ENCODE measurements at regions of chr17 and their contacts with region 1.

Region 1: GRCh38 chr17:77331301-77331864 is 190.6 kb downstream of the SEC14L1 start:
- DNase-seq: peak; percentile 98
- ATAC-seq: peak; percentile 88
- H3K4me3 Mint-ChIP-seq: peak overlapping the region; percentile 54
- H3K27ac Mint-ChIP-seq: peak overlapping the region; percentile 90
- H3K4me1 Mint-ChIP-seq: peaks cover 45% of the 10 kb centered on the region
- H3K27me3 Mint-ChIP-seq: no peaks in the 10 kb centered on the region
- CTCF ChIP-seq: peak; percentile 98

Region 2: DNA sequence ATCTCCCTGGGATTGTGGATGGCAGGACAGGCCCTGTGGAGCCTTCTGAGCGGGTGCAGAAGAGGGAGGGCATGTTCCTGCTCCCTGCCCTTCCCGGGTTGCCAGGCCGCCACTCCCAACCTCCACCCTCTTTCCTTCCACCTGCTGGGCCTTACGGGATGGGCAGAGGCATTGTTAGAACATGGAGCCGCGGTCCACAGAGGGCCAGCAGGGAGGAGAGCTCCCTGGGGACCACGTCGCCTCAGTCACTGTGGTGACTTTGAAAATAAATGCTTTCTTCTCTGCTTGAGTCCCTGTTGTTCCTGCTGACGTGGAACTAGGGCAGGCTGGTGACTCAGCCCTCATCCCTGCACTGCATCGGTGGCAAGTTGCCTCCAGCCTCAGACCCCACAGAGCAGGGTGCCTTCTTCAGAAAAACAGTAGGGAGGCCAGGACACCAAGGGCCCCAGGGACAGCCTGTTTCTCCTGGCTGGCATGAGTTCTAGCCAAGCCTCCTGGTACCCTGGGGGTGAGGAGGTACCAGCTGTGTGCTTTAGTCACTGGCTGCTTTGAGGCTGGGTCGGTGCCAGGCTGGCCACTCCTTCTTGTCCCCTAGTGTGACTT is 34.3 kb after region 1 on chr17:
- CTCF ChIA-PET with region 1: interaction called, 10 read pairs
- POLR2A ChIA-PET with region 1: interaction called, 4 read pairs
- intact Hi-C with region 1: no loop called
- DNase-seq: peak; percentile 59
- ATAC-seq: peak; percentile 66
- H3K4me3 Mint-ChIP-seq: no peak overlapping the region
- H3K27ac Mint-ChIP-seq: no peak overlapping the region
- H3K4me1 Mint-ChIP-seq: peaks cover 47% of the 10 kb centered on the region
- H3K27me3 Mint-ChIP-seq: no peaks in the 10 kb centered on the region
- CTCF ChIP-seq: no peak

Region 3: DNA sequence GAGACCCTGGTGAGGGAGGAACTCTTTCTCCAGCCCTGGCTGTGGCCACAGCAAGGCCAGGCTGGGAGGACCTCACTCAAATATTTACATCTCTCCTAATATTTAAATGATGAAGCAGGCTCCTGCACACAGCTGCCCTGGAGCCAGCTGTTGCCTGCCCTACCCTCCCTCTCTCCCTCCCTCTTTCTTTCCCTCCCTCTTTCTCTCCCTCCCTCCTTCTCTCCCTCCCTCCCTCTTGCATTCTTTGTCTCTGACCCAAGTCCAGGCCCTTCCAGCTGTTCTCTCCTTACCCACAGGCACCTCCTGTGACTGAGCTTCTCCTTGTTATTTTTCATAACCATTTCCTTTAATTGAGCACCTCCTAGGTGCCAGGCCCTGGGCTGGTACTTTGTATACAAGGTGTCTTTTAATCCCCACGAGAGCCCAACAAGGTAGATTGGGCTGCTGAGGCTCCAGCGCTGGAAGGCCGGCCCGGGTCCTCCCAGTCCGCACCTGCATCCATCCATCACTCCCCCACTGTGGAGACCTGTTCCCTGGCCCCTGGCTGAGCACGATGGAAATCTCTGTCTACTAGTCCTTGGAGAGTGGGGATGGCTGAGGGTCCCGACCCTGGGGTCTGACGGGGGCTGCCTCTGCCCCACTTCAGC is 51.7 kb after region 1 on chr17:
- CTCF ChIA-PET with region 1: interaction called, 15 read pairs
- POLR2A ChIA-PET with region 1: interaction called, 5 read pairs
- intact Hi-C with region 1: loop called (anchors 5 kb)
- DNase-seq: no peak
- ATAC-seq: peak; percentile 5
- H3K4me3 Mint-ChIP-seq: no peak overlapping the region
- H3K27ac Mint-ChIP-seq: peak overlapping the region; percentile 63
- H3K4me1 Mint-ChIP-seq: peaks cover 87% of the 10 kb centered on the region
- H3K27me3 Mint-ChIP-seq: no peaks in the 10 kb centered on the region
- CTCF ChIP-seq: no peak

Region 4: DNA sequence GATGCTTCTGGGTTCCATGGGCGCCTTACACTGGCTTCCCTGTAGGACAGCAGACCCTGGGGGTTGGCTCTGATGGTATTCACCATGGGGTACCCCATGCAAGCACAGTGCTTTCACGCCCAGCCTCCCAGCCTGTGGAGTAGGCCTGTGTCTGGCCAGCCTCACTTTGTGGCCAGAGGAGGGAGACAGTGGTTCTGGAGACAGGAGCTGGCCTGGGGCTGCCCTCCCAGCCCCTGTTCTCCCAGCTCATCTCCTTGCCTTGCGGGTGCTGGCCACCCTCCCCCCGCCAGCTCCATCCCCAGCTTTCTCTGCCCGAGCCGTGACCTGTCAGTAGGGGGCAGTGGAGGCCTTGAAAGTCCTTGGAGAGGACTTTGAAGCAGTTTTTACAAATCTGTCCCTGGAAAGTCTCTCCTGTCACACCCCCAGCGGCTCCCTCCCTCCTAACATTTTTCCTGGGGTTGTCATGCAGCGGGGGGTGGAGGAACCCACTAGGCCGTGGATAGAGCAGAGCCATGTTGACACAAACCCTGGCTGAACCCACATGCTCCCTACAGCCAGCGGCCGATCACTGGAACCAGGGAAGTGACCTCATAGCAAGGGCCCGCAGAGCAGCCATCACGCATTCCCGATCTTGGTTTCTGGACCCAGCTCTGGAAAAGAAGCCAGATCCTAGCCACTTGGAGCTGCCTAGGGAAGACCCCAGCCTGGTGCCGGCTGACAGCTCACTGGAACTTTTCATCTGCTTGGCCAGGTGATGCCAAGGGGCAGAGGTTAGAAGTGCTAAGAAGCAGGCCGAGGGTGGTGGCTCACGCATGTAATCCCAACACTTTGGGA is 98.8 kb after region 1 on chr17:
- CTCF ChIA-PET with region 1: interaction called, 21 read pairs
- POLR2A ChIA-PET with region 1: no interaction called
- intact Hi-C with region 1: loop called (anchors 5 kb)
- DNase-seq: peak; percentile 89
- ATAC-seq: peak; percentile 34
- H3K4me3 Mint-ChIP-seq: no peak overlapping the region
- H3K27ac Mint-ChIP-seq: peak overlapping the region; percentile 91
- H3K4me1 Mint-ChIP-seq: peaks cover 83% of the 10 kb centered on the region
- H3K27me3 Mint-ChIP-seq: no peaks in the 10 kb centered on the region
- CTCF ChIP-seq: peak; percentile 89

Region 5: DNA sequence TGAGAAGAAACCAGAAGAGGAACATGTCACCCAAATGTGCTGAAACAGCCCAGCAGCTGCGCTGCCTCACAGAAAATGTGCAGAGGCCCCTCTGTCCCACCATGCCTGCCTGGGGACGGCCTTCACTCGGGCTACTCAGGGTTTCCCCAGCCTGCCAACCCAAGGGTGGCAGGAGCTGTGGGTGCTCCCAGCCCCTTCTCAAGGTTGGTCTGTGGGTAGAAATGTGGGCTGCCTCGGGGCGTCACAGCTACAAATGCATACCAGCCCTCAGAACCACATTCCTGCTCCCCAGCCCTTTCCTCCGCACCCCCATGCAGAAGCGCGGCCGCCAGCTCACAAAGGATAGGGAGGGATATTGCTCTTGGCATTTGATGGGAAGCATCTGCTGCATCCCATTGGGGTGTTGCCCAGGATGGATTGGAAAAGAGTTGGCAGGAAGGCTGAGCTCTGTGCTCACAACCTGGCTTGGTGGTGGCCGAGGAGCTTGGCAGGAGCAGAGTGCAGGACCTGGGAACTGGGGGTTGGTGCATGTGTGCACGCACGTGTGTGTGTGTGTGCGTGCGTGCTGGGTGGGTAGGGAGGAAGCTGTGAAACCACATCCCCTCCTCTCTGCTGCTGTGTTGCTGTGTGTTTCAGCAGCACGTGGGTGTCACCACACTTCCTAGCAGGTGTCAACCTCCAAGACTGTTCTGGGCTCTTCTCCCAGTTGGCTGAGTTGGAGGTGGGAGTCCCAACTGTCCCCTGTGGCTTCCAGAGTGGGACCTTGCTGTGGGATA is 113.8 kb after region 1 on chr17:
- CTCF ChIA-PET with region 1: interaction called, 11 read pairs
- POLR2A ChIA-PET with region 1: interaction called, 4 read pairs
- intact Hi-C with region 1: no loop called
- DNase-seq: peak; percentile 93
- ATAC-seq: peak; percentile 50
- H3K4me3 Mint-ChIP-seq: peak overlapping the region; percentile 77
- H3K27ac Mint-ChIP-seq: peak overlapping the region; percentile 94
- H3K4me1 Mint-ChIP-seq: peaks cover 91% of the 10 kb centered on the region
- H3K27me3 Mint-ChIP-seq: no peaks in the 10 kb centered on the region
- CTCF ChIP-seq: no peak

Region 6: DNA sequence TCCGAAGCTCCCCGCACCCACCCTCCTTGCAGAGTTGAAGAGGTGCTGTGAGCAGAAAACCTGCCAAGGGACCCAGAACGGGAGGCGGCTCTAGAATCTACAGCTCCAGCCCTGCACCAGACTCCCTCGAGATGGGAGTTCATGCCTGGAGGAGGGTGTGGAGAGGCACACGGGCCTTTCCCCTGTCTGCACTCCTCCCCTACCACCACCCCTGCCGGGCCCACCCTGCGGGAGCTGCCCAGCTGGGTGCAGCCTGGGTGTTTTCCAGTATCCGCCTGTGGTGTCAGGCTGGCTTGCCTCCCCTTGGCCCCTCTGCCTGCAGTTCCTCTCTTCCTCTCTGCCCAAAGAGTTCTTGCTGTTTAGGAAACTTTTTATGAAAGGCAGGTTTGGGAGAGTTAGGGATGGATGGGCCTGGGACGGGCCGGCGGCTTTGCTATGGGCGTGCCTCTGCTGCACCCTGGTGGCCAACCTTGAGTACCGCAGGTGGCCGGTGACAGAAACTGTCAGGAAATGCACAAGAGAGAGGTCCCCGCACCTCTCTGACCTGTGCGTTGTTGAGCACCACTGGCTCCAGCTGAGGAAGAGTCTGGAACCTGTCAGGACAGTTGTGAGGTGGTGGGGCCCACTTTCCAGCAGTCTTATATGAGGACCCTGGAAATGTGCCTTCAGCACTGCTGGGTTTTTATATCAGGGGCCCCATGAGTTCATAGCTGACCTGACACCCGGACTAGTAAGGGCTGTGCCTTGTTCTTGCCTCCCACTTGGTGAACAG is 163.5 kb after region 1 on chr17:
- CTCF ChIA-PET with region 1: interaction called, 24 read pairs
- POLR2A ChIA-PET with region 1: no interaction called
- intact Hi-C with region 1: no loop called
- DNase-seq: peak; percentile 81
- ATAC-seq: peak; percentile 76
- H3K4me3 Mint-ChIP-seq: no peak overlapping the region
- H3K27ac Mint-ChIP-seq: peak overlapping the region; percentile 44
- H3K4me1 Mint-ChIP-seq: peaks cover 27% of the 10 kb centered on the region
- H3K27me3 Mint-ChIP-seq: no peaks in the 10 kb centered on the region
- CTCF ChIP-seq: peak; percentile 100

Measured in activated CD8-positive, alpha-beta T cell treated with anti-CD3 and anti-CD28 coated beads for 36 hours (primary cell).